HCT116 (cell line): ENCODE measurements at regions of chr2 and their contacts with region 1.

Region 1: GRCh38 chr2:206780671-206781070 is 15.3 kb downstream of the FASTKD2 start:
- DNase-seq: no peak
- ATAC-seq: no peak
- H3K4me3 ChIP-seq: no peak overlapping the region
- H3K27ac ChIP-seq: no peak overlapping the region
- H3K4me1 ChIP-seq: no peaks in the 10 kb centered on the region
- H3K27me3 ChIP-seq: no peaks in the 10 kb centered on the region
- CTCF ChIP-seq: no peak
- POLR2A ChIP-seq: no peak
- RAD21 ChIP-seq: no peak

Region 2: DNA sequence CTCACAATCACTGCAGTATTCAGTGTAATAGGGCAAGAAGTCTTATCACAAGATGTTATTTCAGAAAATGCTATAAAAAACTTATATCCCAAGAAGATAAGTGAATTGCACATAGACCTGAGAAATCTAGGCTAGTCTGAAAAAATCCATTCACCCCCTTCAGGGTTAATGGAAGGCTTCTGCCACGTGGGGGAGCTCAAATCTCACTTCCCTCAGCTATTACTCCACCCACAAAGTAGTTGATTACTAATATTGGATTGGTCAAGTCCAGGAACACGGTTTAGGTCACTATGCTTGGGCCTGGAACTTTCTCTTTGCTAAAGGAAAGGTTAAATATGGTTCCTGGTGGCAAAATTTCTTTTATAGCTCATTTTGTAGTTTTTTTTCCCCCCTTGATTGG is 388.6 kb before region 1 on chr2:
- CTCF ChIA-PET with region 1: no interaction called
- POLR2A ChIA-PET with region 1: no interaction called
- RAD21 ChIA-PET with region 1: no interaction called
- intact Hi-C with region 1: loop called (anchors 1 kb)
- DNase-seq: peak; percentile 46
- ATAC-seq: peak; percentile 99
- H3K4me3 ChIP-seq: no peak overlapping the region
- H3K27ac ChIP-seq: no peak overlapping the region
- H3K4me1 ChIP-seq: no peaks in the 10 kb centered on the region
- H3K27me3 ChIP-seq: no peaks in the 10 kb centered on the region
- CTCF ChIP-seq: peak; percentile 57 to 72 (median 65); a peak in 5 of 6 replicates
- POLR2A ChIP-seq: no peak
- RAD21 ChIP-seq: peak; percentile 82

Region 3: DNA sequence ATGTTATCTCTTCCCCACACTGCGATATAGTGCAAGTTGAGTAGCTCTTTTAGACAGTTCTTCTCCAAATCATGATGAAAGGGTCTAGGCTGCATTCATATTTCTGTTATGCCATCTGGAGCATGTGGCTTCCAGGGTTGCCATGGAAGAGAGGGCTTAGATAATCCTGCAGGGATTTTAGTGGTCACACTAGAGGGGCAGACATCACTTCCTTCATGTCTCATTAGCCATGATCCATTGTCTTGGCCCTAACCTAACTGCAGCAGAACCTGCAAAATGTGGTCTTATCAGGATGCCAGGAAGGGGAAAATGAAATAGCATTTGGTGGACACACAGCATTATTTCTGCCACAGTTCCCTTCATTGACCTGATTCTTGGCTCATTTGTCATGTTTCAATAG is 254.3 kb before region 1 on chr2:
- CTCF ChIA-PET with region 1: no interaction called
- POLR2A ChIA-PET with region 1: no interaction called
- RAD21 ChIA-PET with region 1: no interaction called
- intact Hi-C with region 1: no loop called
- DNase-seq: no peak
- ATAC-seq: no peak
- H3K4me3 ChIP-seq: no peak overlapping the region
- H3K27ac ChIP-seq: no peak overlapping the region
- H3K4me1 ChIP-seq: no peaks in the 10 kb centered on the region
- H3K27me3 ChIP-seq: no peaks in the 10 kb centered on the region
- CTCF ChIP-seq: no peak
- POLR2A ChIP-seq: no peak
- RAD21 ChIP-seq: no peak